Posterior vena cava (tissue), 2 donors: ENCODE measurements at regions of chr5 and their contacts with region 1.

Region 1: GRCh38 chr5:52837068-52837467 is 49.4 kb downstream of the ITGA1 start:
- DNase-seq: peak; percentile 81

Region 2: GRCh38 chr5:52491071-52491787 is 345.8 kb before region 1 on chr5:
- intact Hi-C with region 1: no loop called
- DNase-seq: no peak

Region 3: GRCh38 chr5:52799983-52800393 is 37.1 kb before region 1 on chr5:
- intact Hi-C with region 1: loop called in 1 of 2 experiments (anchors 5 kb)
- DNase-seq: peak; percentile 99

Region 4: DNA sequence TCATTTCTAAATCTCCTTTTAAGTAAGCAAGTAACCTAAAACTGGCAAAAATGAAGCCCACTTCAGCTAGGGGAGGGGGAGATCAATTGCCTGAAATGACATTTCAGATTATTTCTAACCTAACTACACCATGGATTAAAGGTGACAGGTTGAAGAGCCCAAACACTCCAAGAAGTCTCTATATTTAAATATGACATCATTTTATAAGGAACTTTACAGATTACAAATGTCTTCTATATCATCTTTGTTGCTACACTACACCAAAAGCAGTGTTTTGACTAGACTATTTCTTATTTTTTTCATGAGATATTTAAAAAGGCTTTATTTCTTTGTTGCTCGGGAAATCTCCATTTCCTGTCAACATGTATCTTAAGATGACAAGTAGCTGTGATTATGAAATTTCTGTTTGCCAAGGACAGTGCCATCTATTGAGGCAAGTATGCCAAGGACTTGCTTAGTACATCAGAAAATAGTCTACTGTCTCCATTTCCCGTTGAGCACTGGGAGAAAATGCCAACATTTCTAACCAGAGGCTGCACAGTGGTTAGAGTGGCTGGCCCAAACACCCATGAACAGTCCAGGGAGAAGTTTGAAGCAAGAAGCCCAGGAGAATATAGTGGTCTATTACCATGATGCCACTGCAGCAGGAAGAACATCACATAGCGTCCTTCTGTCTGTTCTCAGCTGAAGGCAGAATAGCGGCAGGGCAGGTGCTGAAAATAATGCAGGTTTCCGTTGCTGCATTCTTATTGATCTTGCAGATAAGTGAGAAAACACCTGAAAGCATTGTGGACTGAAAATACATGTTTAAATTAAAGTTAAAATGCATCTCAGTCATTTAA is 58.7 kb after region 1 on chr5:
- intact Hi-C with region 1: loop called in 1 of 2 experiments (anchors 5 kb)
- DNase-seq: no peak

Region 5: GRCh38 chr5:52922386-52922785 is 85.3 kb after region 1 on chr5:
- intact Hi-C with region 1: no loop called
- DNase-seq: no peak

Region 6: DNA sequence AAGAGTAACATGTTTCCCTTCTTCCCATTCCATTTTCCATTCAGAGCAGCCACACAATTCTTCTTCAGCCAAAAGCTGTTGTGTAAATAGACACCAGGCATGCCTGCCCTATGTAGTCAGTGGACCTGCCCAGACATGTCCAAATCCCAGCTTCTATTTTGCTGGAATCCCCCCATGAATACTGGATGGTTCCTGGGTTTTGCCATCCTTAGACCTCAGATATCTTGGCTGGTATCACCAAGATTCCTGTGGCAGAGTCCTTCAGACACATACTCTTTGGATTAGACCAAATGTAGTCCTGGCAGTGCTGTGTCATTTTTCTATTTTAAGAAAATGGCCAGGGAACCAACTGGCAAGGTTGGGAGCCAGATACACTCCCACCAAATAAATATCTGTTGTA is 653.7 kb after region 1 on chr5:
- intact Hi-C with region 1: no loop called
- DNase-seq: no peak